OCI-LY7 (cell line): ENCODE measurements at regions of chr11 and their contacts with region 1.

Region 1: GRCh38 chr11:64787526-64788320 is 9.4 kb upstream of the SF1 start:
- DNase-seq: peak; percentile 63
- H3K4me3 ChIP-seq: no peak overlapping the region
- H3K27ac ChIP-seq: peak overlapping the region; percentile 6
- H3K4me1 ChIP-seq: peaks cover 14% of the 10 kb centered on the region
- CTCF ChIP-seq: peak; percentile 98

Region 2: GRCh38 chr11:64263021-64263946 is 524.4 kb before region 1 on chr11:
- CTCF ChIA-PET with region 1: no interaction called
- POLR2A ChIA-PET with region 1: no interaction called
- intact Hi-C with region 1: no loop called
- DNase-seq: no peak
- H3K4me3 ChIP-seq: no peak overlapping the region
- H3K27ac ChIP-seq: no peak overlapping the region
- H3K4me1 ChIP-seq: peaks cover 12% of the 10 kb centered on the region
- CTCF ChIP-seq: no peak

Region 3: GRCh38 chr11:64803163-64803845 is 15.6 kb after region 1 on chr11 and contains the start of gene MAP4K2:
- CTCF ChIA-PET with region 1: no interaction called
- POLR2A ChIA-PET with region 1: no interaction called
- intact Hi-C with region 1: loop called (anchors 2 kb)
- DNase-seq: peak; percentile 91
- H3K4me3 ChIP-seq: peak within 1 kb of the TSS; percentile 78
- H3K27ac ChIP-seq: peak within 1 kb of the TSS; percentile 82
- H3K4me1 ChIP-seq: peaks cover 50% of the 10 kb centered on the region
- CTCF ChIP-seq: peak; percentile 61; the same call in 1 of the 2 replicates
- total RNA-seq, gene MAP4K2: 109 and 115 TPM in 2 replicates

Region 4: GRCh38 chr11:64894070-64894796 is 106.5 kb after region 1 on chr11:
- CTCF ChIA-PET with region 1: no interaction called
- POLR2A ChIA-PET with region 1: no interaction called
- intact Hi-C with region 1: loop called (anchors 5 kb)
- DNase-seq: peak; percentile 90
- H3K4me3 ChIP-seq: no peak overlapping the region
- H3K27ac ChIP-seq: no peak overlapping the region
- H3K4me1 ChIP-seq: peaks cover 7% of the 10 kb centered on the region
- CTCF ChIP-seq: peak; percentile 94